ENCODE measurements at regions of chr19 and their contacts with region 1.

Region 1: DNA sequence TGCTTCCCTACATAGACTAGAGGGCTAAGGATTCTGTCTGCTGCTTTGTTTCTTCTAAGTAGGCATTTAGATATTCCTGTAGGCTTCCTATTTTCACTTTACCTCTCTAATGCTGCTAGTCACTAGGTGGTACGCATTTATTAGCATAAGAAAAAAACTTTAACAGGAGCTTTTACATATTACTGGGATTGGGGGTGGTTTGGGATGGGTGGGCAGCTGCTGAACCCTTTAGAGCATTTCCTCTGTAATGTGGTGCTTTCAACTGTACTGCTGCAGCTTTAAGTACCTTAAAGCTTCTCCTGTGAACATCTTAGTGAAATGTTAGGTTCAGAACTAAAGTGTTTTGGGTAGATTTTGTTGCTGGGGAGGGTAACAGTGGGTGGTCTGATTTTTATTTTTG is 92.6 kb downstream of the ZNF486 start:
- DNase-seq: no peak
- ATAC-seq: no peak
- H3K4me3 ChIP-seq: no peak overlapping the region
- H3K27ac ChIP-seq: no peak overlapping the region
- H3K4me1 ChIP-seq: no peaks in the 10 kb centered on the region
- H3K27me3 ChIP-seq: no peaks in the 10 kb centered on the region
- CTCF ChIP-seq: no peak
- POLR2A ChIP-seq: no peak

Region 2: GRCh38 chr19:19911150-19911549 is 348.5 kb before region 1 on chr19:
- intact Hi-C with region 1: no loop called
- DNase-seq: no peak
- ATAC-seq: no peak
- H3K4me3 ChIP-seq: no peak overlapping the region
- H3K27ac ChIP-seq: no peak overlapping the region
- H3K4me1 ChIP-seq: no peaks in the 10 kb centered on the region
- H3K27me3 ChIP-seq: no peaks in the 10 kb centered on the region
- CTCF ChIP-seq: no peak
- POLR2A ChIP-seq: no peak

Region 3: GRCh38 chr19:20067943-20068342 is 191.7 kb before region 1 on chr19:
- intact Hi-C with region 1: no loop called
- DNase-seq: no peak
- ATAC-seq: no peak
- H3K4me3 ChIP-seq: no peak overlapping the region
- H3K27ac ChIP-seq: no peak overlapping the region
- H3K4me1 ChIP-seq: no peaks in the 10 kb centered on the region
- H3K27me3 ChIP-seq: no peaks in the 10 kb centered on the region
- CTCF ChIP-seq: no peak
- POLR2A ChIP-seq: no peak

Region 4: DNA sequence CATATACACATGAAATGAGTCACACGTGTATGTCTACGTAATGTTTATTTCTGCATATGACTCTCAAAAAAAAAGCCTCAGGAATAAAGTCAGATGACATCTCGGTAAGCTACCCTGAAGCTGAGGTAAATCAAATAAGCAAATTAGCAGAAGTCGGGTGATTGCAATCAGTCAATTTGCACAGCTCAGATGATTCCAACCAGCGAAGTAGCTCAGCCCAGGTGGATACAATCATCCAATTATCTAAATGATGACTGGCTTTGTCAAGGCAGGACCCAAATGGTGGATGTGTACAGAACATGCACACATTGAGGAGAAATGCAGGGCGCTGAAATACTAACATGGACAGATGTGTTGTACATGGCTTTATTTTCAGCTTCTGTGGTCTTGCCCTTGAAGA is 55.9 kb after region 1 on chr19:
- intact Hi-C with region 1: no loop called
- DNase-seq: no peak
- ATAC-seq: no peak
- H3K4me3 ChIP-seq: no peak overlapping the region
- H3K27ac ChIP-seq: peak overlapping the region in 3 of 4 donors; percentile 8 to 12 (median 9)
- H3K4me1 ChIP-seq: peaks cover 42% of the 10 kb centered on the region
- H3K27me3 ChIP-seq: no peaks in the 10 kb centered on the region
- CTCF ChIP-seq: no peak
- POLR2A ChIP-seq: no peak

Region 5: GRCh38 chr19:20367811-20368294 is 108.2 kb after region 1 on chr19:
- intact Hi-C with region 1: loop called (anchors 10 kb)
- DNase-seq: peak; percentile 69 to 85 (median 70)
- ATAC-seq: peak; percentile 91
- H3K4me3 ChIP-seq: no peak overlapping the region
- H3K27ac ChIP-seq: peak overlapping the region in 2 of 4 donors; percentile 51 to 53
- H3K4me1 ChIP-seq: peaks cover 7% of the 10 kb centered on the region
- H3K27me3 ChIP-seq: no peaks in the 10 kb centered on the region
- CTCF ChIP-seq: peak in 5 of 7 experiments; percentile 17 to 57 (median 53)
- POLR2A ChIP-seq: peak in 1 of 3 donors; percentile 50

Region 6: DNA sequence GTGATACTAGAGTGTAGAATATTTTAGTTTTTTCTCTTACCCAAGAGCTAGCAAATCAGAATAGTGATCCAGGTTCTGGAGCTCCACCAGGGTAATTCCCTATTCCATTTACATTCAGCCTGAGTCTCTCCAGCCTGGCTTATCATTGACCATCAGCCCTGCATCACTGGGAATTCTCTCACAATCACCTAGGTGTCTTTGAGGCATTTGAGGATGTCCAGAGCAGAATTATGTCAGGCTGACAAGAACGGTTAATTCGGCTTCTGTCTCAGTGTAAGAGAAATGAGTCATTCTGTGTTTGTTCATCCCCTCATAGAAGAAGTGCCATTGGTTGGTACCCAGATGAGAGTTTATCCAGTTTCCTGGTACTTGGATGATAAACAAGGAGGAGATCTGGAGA is 125.4 kb after region 1 on chr19:
- intact Hi-C with region 1: no loop called
- DNase-seq: no peak
- ATAC-seq: no peak
- H3K4me3 ChIP-seq: no peak overlapping the region
- H3K27ac ChIP-seq: no peak overlapping the region
- H3K4me1 ChIP-seq: no peaks in the 10 kb centered on the region
- H3K27me3 ChIP-seq: no peaks in the 10 kb centered on the region
- CTCF ChIP-seq: no peak
- POLR2A ChIP-seq: no peak

Measured in body of pancreas (tissue), 4 donors.